Esophagus muscularis mucosa (tissue), 4 donors: ENCODE measurements at regions of chr5 and their contacts with region 1.

Region 1: DNA sequence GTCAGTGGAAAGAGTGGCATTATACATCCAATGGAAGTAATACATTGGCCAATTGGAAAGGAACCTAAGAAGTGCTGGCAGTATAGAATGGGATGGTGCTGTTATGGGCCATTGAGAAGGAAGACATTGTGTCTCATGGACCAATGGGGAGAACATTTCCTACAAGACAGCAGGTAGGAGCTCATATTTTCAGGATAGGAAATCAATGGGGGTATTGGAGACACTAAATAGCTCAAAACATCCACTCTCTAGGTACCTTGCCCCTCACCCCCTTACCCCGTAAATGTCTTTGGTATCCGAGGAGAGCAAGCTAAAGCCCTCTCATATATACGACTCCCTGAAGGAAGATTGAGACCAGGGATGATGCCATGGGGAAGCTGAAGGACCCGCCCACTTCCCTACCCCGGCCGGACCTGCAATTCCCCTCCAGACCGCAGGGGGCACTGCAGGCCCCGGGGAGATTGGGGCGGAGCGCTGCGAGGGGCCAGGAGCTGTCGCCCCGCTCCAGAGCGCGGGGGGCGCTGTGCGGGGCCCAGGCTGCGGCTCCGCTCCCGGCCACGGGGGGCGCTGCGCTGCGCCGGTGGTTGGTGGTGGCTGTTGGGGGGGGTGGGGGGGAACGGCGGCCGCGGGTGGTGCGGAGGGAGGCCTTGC is at the start of gene KDM3B:
- DNase-seq: no peak
- H3K4me3 ChIP-seq: peak within 1 kb of the TSS; percentile 88 to 97 (median 93)
- H3K27ac ChIP-seq: peak within 1 kb of the TSS; percentile 96 to 98 (median 98)
- H3K4me1 ChIP-seq: peaks cover 30 to 35% (median 34%) of the 10 kb centered on the region in 4 donors
- H3K27me3 ChIP-seq: no peaks in the 10 kb centered on the region
- CTCF ChIP-seq: peak; percentile 95 to 99 (median 96)
- EP300 ChIP-seq: no peak
- POLR2A ChIP-seq: no peak
- total RNA-seq, gene KDM3B: 61.3 to 88.8 (median 74.9) TPM

Region 2: DNA sequence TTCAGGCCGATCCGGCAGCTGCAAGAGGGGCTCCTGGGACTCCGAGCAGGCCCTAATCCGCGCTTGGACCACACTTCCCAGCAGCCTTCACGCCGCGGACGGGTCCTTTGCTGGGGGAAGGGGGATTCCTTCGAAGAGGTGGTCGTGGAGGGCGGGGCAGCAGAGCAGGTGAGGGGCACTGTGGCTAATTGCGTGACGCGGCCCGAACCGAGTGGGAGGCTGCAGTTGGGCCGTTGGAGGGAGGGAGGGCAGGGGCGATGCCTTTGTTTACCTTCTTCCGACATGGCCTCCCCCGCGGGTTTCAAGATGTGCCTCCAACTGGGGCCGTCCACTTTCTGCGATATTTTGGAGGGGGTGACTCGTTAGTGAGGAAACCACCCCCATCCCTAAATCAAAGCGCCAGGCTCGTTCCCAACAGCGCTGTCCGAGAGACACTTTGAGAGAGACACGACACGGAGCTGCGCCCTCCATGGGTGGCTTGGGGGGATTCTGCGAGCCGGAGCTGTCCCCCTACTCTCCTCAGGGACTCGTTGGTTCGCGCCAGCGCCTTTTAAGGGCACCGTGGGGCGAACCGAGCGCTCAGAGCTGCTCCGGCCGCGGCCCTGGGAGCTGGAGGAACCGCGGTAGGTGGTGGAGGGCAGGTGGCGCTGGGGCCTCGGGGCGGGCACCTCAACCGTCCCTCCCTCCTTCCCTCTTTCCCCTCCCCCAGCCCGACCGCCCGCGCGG is 14.3 kb before region 1 on chr5 and contains the start of gene FAM53C:
- intact Hi-C with region 1: loop called (anchors 2 kb)
- DNase-seq: peak; percentile 98
- H3K4me3 ChIP-seq: peak within 1 kb of the TSS; percentile 79 to 97 (median 89)
- H3K27ac ChIP-seq: peak within 1 kb of the TSS; percentile 91 to 98 (median 94)
- H3K4me1 ChIP-seq: peaks cover 21 to 38% (median 34%) of the 10 kb centered on the region in 4 donors
- H3K27me3 ChIP-seq: no peaks in the 10 kb centered on the region
- CTCF ChIP-seq: no peak
- EP300 ChIP-seq: no peak
- POLR2A ChIP-seq: peak; percentile 93
- total RNA-seq, gene FAM53C: 22.4 to 40.0 (median 29.6) TPM

Region 3: DNA sequence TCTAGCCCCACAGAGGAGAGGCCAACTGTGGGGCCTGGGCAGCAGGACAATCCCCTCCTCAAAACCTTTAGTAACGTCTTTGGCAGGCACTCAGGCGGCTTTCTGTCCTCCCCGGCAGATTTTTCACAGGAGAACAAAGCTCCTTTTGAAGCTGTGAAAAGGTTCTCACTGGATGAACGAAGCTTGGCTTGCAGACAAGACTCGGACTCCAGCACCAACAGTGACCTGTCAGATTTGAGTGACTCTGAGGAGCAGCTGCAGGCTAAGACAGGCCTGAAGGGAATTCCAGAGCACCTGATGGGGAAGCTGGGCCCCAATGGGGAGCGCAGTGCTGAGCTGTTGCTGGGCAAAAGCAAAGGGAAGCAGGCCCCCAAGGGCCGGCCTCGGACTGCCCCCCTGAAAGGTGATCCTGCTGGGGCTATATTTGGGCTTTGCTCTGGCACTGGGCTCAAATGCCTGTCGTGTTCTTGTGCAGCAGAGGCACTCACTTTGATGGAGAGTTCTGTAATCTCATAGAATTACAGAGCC is 39.7 kb after region 1 on chr5:
- intact Hi-C with region 1: no loop called
- DNase-seq: no peak
- H3K4me3 ChIP-seq: peak overlapping the region in 1 of 4 donors; percentile 1
- H3K27ac ChIP-seq: peak overlapping the region; percentile 28 to 65 (median 54)
- H3K4me1 ChIP-seq: peaks cover 18 to 24% (median 21%) of the 10 kb centered on the region in 4 donors
- H3K27me3 ChIP-seq: no peaks in the 10 kb centered on the region
- CTCF ChIP-seq: no peak
- EP300 ChIP-seq: no peak
- POLR2A ChIP-seq: no peak

Region 4: GRCh38 chr5:138408023-138408422 is 55.8 kb after region 1 on chr5:
- intact Hi-C with region 1: loop called (anchors 5 kb)
- DNase-seq: no peak
- H3K4me3 ChIP-seq: no peak overlapping the region
- H3K27ac ChIP-seq: no peak overlapping the region
- H3K4me1 ChIP-seq: no peaks in the 10 kb centered on the region
- H3K27me3 ChIP-seq: no peaks in the 10 kb centered on the region
- CTCF ChIP-seq: no peak
- EP300 ChIP-seq: no peak
- POLR2A ChIP-seq: no peak